ENCODE measurements at regions of chr7 and their contacts with region 1.

Region 1: GRCh38 chr7:134432296-134433152 is 26.4 kb downstream of the AKR1B1 start:
- DNase-seq: peak; percentile 79
- H3K4me3 ChIP-seq: peak overlapping the region; percentile 29
- H3K27ac ChIP-seq: no peak overlapping the region
- H3K4me1 ChIP-seq: peaks cover 8% of the 10 kb centered on the region
- CTCF ChIP-seq: peak; percentile 85

Region 2: DNA sequence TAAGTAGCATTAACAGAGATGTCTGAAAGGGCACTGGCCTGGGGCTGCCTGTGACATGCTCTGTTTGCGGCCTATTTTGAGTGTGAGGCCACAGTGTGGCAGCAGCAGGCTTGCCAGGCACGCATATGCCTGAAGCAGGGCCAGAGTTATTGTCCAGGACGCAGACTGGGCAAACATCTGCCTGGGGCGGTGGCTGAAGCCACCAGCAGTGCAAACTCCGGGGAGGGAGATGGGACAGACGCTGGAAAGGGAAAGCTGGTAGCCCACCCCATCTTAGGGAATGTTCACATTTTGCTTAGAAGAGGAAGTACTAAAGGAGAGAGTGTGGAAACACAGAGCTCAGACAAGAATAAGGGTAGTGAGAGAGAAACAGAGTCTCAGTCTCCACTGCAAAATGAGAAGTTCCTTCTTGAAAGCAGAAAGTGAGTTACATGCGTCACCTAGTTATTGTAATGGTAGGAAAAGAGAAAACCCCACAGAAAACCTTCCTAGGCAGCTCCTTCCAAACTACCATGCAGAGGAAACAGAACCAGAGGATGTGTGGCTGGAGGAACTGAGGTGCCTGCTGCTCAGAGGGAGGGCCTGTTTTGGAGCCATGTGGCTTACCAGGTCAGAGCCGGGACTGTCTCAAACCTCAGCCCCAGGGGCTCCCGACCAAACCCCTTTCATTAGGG is 11.8 kb after region 1 on chr7:
- CTCF ChIA-PET with region 1: no interaction called
- POLR2A ChIA-PET with region 1: no interaction called
- intact Hi-C with region 1: no loop called
- DNase-seq: no peak
- H3K4me3 ChIP-seq: no peak overlapping the region
- H3K27ac ChIP-seq: no peak overlapping the region
- H3K4me1 ChIP-seq: no peaks in the 10 kb centered on the region
- CTCF ChIP-seq: no peak

Region 3: GRCh38 chr7:134478707-134479106 is 46.2 kb after region 1 on chr7:
- CTCF ChIA-PET with region 1: no interaction called
- POLR2A ChIA-PET with region 1: interaction called, 3 read pairs
- intact Hi-C with region 1: loop called (anchors 2 kb)
- DNase-seq: no peak
- H3K4me3 ChIP-seq: no peak overlapping the region
- H3K27ac ChIP-seq: no peak overlapping the region
- H3K4me1 ChIP-seq: no peaks in the 10 kb centered on the region
- CTCF ChIP-seq: peak; percentile 49

Region 4: GRCh38 chr7:134514663-134515062 is 82.1 kb after region 1 on chr7:
- CTCF ChIA-PET with region 1: interaction called, 5 read pairs
- POLR2A ChIA-PET with region 1: no interaction called
- intact Hi-C with region 1: loop called (anchors 1 kb)
- DNase-seq: peak; percentile 77
- H3K4me3 ChIP-seq: no peak overlapping the region
- H3K27ac ChIP-seq: no peak overlapping the region
- H3K4me1 ChIP-seq: no peaks in the 10 kb centered on the region
- CTCF ChIP-seq: peak; percentile 86

Region 5: GRCh38 chr7:134547397-134548054 is 115.0 kb after region 1 on chr7:
- CTCF ChIA-PET with region 1: interaction called, 18 read pairs
- POLR2A ChIA-PET with region 1: interaction called, 3 read pairs
- intact Hi-C with region 1: loop called (anchors 1 kb)
- DNase-seq: peak; percentile 59
- H3K4me3 ChIP-seq: no peak overlapping the region
- H3K27ac ChIP-seq: no peak overlapping the region
- H3K4me1 ChIP-seq: no peaks in the 10 kb centered on the region
- CTCF ChIP-seq: peak; percentile 90

Region 6: GRCh38 chr7:134605973-134606923 is 173.7 kb after region 1 on chr7:
- CTCF ChIA-PET with region 1: interaction called, 7 read pairs
- POLR2A ChIA-PET with region 1: interaction called, 4 read pairs
- intact Hi-C with region 1: loop called (anchors 1 kb)
- DNase-seq: peak; percentile 66
- H3K4me3 ChIP-seq: no peak overlapping the region
- H3K27ac ChIP-seq: no peak overlapping the region
- H3K4me1 ChIP-seq: no peaks in the 10 kb centered on the region
- CTCF ChIP-seq: peak; percentile 98

Region 7: GRCh38 chr7:134701272-134701671 is 268.7 kb after region 1 on chr7:
- CTCF ChIA-PET with region 1: no interaction called
- POLR2A ChIA-PET with region 1: no interaction called
- intact Hi-C with region 1: loop called (anchors 5 kb)
- DNase-seq: peak; percentile 60
- H3K4me3 ChIP-seq: no peak overlapping the region
- H3K27ac ChIP-seq: no peak overlapping the region
- H3K4me1 ChIP-seq: no peaks in the 10 kb centered on the region
- CTCF ChIP-seq: peak; percentile 78

Region 8: GRCh38 chr7:134943764-134944400 is 511.4 kb after region 1 on chr7:
- CTCF ChIA-PET with region 1: no interaction called
- POLR2A ChIA-PET with region 1: no interaction called
- intact Hi-C with region 1: loop called (anchors 10 kb)
- DNase-seq: peak; percentile 27
- H3K4me3 ChIP-seq: no peak overlapping the region
- H3K27ac ChIP-seq: no peak overlapping the region
- H3K4me1 ChIP-seq: no peaks in the 10 kb centered on the region
- CTCF ChIP-seq: peak; percentile 67

Measured in OCI-LY7 (cell line).